Activated T-helper 1 cell treated with anti-CD3 and anti-CD28 coated beads, Interleukin-12 subunit alpha, Interleukin-12 subunit beta, Interleukin-2, Interleukin-4 antibody, amounts not matched to agents 30 ng/mL and 10 ng/mL and 1 ng/mL, durations not matched to agents 14 hours and 24 hours and 36 hours (primary cell): ENCODE measurements at regions of chr11 and their contacts with region 1.

Region 1: GRCh38 chr11:66835768-66836405 is 7.4 kb upstream of the RCE1 start:
- DNase-seq: no peak
- H3K4me3 Mint-ChIP-seq: no peak overlapping the region
- H3K27ac Mint-ChIP-seq: no peak overlapping the region
- H3K4me1 Mint-ChIP-seq: peaks cover 22% of the 10 kb centered on the region
- H3K27me3 Mint-ChIP-seq: no peaks in the 10 kb centered on the region

Region 2: GRCh38 chr11:66579017-66579606 is 256.8 kb before region 1 on chr11:
- intact Hi-C with region 1: loop called (anchors 1 kb)
- DNase-seq: peak; percentile 53
- H3K4me3 Mint-ChIP-seq: no peak overlapping the region
- H3K27ac Mint-ChIP-seq: peak overlapping the region; percentile 9
- H3K4me1 Mint-ChIP-seq: peaks cover 14% of the 10 kb centered on the region
- H3K27me3 Mint-ChIP-seq: peaks cover 15% of the 10 kb centered on the region

Region 3: DNA sequence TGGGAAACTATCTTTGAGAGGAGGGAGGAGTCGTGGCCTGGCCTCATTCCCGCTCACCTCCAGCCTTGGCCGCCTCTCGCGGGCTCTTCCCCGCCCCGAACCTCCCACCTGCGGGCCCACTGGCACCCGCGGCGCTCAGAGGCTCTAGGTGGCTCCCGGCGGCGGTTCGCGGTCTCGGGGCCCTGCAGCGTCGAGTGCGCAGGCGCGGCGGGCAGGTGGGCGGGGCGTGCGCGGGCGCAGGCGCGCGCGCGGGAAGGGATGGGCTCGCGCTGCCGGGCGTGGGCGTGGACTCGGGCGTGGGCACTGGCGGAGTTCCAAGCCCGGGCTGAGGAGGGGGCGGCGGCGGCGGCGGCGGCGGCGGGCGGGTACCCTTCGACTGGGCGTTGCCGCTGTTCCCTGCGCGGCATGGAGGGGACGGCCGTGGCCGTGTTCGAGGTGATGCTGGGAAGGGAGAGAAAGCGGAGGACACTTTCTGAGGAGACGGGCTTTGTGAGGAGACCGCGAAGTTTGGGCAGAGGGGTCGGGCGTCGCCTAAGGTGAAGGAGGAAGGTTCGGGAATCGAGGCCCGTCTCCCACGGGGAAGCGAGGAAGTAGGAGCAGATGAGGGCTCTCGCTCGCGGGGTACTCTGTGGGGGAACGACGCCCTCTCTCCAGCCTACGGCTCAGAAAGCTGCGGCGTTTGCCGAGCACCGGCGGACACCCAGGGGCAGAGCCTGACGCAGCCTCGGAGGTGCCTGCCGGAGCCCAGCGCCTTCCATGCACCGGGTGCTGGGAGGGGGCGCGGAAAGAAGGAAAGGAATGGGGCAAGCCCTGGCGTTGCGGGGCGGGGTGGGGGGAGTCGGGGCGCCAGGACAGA is 91.2 kb before region 1 on chr11:
- intact Hi-C with region 1: loop called (anchors 2 kb)
- DNase-seq: peak; percentile 91
- H3K4me3 Mint-ChIP-seq: peak overlapping the region; percentile 90
- H3K27ac Mint-ChIP-seq: peak overlapping the region; percentile 80
- H3K4me1 Mint-ChIP-seq: no peaks in the 10 kb centered on the region
- H3K27me3 Mint-ChIP-seq: peaks cover 2% of the 10 kb centered on the region

Region 4: GRCh38 chr11:66762088-66762487 is 73.8 kb before region 1 on chr11:
- intact Hi-C with region 1: no loop called
- DNase-seq: no peak
- H3K4me3 Mint-ChIP-seq: no peak overlapping the region
- H3K27ac Mint-ChIP-seq: no peak overlapping the region
- H3K4me1 Mint-ChIP-seq: no peaks in the 10 kb centered on the region
- H3K27me3 Mint-ChIP-seq: no peaks in the 10 kb centered on the region